Gastrocnemius medialis (tissue), 4 donors: ENCODE measurements at regions of chr1 and their contacts with region 1.

Region 1: DNA sequence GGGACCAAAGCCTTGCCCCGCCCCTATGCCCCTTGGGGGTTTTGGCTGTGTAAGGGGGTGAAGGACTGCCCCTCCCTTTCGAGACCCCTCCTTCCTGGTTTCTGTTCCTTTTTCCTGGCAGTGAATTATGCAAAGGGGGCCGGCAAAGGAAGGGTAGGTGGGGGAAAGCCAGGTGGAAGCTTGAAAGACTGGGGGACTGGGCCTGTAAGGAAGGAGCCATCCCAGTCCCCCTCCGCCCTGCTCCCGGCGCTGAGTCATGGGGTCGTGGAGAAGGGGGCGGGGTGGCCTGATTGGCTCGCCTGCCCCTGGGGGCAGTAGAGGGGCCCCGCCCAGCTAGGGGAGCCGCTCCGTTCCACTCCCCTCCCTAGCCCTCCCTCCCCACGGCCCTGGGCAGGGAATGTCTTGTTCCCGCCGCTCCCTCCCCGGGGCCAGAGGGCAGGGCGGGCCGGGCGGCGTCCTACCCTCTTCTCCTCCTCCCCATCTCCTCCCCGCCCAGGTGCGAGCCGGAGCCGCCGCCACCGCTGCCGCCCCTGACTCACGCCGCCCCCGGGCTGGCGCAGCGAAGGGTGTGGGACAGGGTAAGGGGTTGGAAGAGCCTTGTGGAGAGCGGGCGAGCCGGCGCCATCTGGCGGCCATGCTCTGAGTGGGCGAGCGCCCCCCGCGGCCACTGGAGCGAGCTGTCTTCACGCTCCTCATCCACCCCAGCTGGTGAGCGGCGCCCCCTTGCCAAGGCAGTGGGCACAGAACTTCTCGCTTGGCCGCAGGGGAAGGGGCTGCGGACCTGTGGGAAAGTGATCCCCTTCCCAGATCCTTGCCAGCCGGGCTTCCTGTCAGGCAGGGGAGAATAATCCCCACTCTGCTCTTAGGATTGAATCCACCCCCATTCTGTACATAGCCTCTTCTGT is 14.7 kb downstream of the ZBTB7B start:
- DNase-seq: peak; percentile 70 to 90
- ATAC-seq: peak; percentile 84 to 88
- H3K4me3 ChIP-seq: peak overlapping the region; percentile 48 to 52 (median 50)
- H3K27ac ChIP-seq: peak overlapping the region; percentile 80 to 95 (median 86)
- H3K4me1 ChIP-seq: peaks cover 21 to 26% of the 10 kb centered on the region in 2 donors
- H3K27me3 ChIP-seq: no peaks in the 10 kb centered on the region
- CTCF ChIP-seq: peak; percentile 96 to 100 (median 97)
- POLR2A ChIP-seq: peak; percentile 37 to 47

Region 2: GRCh38 chr1:154961497-154962262 is 55.6 kb before region 1 on chr1 and contains the start of gene PYGO2:
- in situ Hi-C with region 1: loop called in 2 of 4 experiments (anchors 10 kb)
- intact Hi-C with region 1: loop called (anchors 1 kb)
- DNase-seq: peak; percentile 55 to 62
- ATAC-seq: peak; percentile 87 to 90
- H3K4me3 ChIP-seq: peak within 1 kb of the TSS; percentile 78 to 95 (median 80)
- H3K27ac ChIP-seq: peak within 1 kb of the TSS; percentile 94 to 100 (median 98)
- H3K4me1 ChIP-seq: peaks cover 28 to 36% of the 10 kb centered on the region in 2 donors
- H3K27me3 ChIP-seq: no peaks in the 10 kb centered on the region
- CTCF ChIP-seq: peak; percentile 59 to 88 (median 84)
- POLR2A ChIP-seq: peak; percentile 85 to 87
- total RNA-seq, gene PYGO2: 12.6 to 22.7 (median 17.8) TPM

Region 3: DNA sequence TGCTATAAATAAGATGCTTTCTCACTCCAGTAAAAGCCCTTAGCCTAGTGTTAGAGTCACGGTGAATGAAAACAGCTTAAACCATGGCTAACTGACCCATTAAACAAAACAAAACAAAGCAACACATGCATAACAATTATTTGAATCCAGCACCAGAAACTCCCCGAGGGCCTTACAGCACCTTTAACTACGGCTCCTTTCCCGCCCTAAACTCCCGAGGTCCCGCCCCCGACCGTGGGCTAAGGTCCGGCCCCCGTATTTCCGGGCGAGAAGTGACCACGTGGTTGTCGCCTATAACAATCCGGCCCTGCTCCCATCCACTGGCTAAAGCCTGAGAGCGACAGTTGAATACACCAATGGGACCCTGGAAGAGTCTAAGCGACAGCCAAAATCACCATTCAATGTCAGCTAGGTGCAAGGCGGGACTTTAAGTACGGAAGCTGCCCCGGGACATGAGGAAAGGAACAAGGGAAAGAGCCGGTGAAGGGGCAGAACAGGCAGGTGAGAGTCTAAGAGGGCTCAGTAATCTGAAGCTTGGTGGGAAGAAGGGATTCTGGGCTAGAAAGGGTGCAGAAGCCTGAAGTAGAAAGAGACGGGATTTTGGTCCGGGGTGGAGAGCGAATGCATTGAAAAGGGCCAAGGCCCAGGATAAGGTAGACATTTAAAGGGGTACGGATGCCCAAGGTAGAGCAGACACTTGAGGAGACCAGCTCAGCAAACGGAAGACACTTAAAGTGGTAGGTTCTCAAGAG is 34.2 kb before region 1 on chr1 and contains the start of gene FLAD1:
- in situ Hi-C with region 1: no loop called
- intact Hi-C with region 1: no loop called
- DNase-seq: peak; percentile 98 to 99
- ATAC-seq: peak; percentile 100
- H3K4me3 ChIP-seq: peak within 1 kb of the TSS; percentile 83 to 86 (median 84)
- H3K27ac ChIP-seq: peak within 1 kb of the TSS; percentile 78 to 91 (median 89)
- H3K4me1 ChIP-seq: peaks cover 14 to 27% of the 10 kb centered on the region in 2 donors
- H3K27me3 ChIP-seq: no peaks in the 10 kb centered on the region
- CTCF ChIP-seq: peak in 1 of 5 experiments; percentile 27
- POLR2A ChIP-seq: peak; percentile 44 to 56
- total RNA-seq, gene FLAD1: 26.6 to 36.8 (median 31.7) TPM

Region 4: GRCh38 chr1:155050560-155051341 is 33.5 kb after region 1 on chr1 and contains the start of gene ADAM15:
- in situ Hi-C with region 1: no loop called
- intact Hi-C with region 1: loop called (anchors 2 kb)
- DNase-seq: peak; percentile 64 to 82
- ATAC-seq: peak; percentile 78 to 83
- H3K4me3 ChIP-seq: peak within 1 kb of the TSS; percentile 82 to 96 (median 90)
- H3K27ac ChIP-seq: peak within 1 kb of the TSS; percentile 90 to 99 (median 94)
- H3K4me1 ChIP-seq: peaks cover 25 to 29% of the 10 kb centered on the region in 2 donors
- H3K27me3 ChIP-seq: no peaks in the 10 kb centered on the region
- CTCF ChIP-seq: peak; percentile 91 to 98 (median 95)
- POLR2A ChIP-seq: no peak
- total RNA-seq, gene ADAM15: 30.3 to 42.8 (median 36.9) TPM